ENCODE measurements at regions of chr2 and their contacts with region 1.

Region 1: GRCh38 chr2:71711133-71711855 is 257.9 kb downstream of the DYSF start:
- DNase-seq: no peak
- ATAC-seq: no peak
- H3K4me3 ChIP-seq: no peak overlapping the region
- H3K27ac ChIP-seq: no peak overlapping the region
- H3K4me1 ChIP-seq: no peaks in the 10 kb centered on the region
- H3K27me3 ChIP-seq: no peaks in the 10 kb centered on the region
- CTCF ChIP-seq: no peak

Region 2: GRCh38 chr2:71778936-71779773 is 67.9 kb after region 1 on chr2:
- CTCF ChIA-PET with region 1: no interaction called
- POLR2A ChIA-PET with region 1: no interaction called
- in situ Hi-C with region 1: no loop called
- intact Hi-C with region 1: no loop called
- DNase-seq: no peak
- ATAC-seq: peak; percentile 72; the same call in 1 of the 2 replicates
- H3K4me3 ChIP-seq: no peak overlapping the region
- H3K27ac ChIP-seq: no peak overlapping the region
- H3K4me1 ChIP-seq: 0 out of 2 replicates have a peak, but pooled peaks cover 3% of the 10 kb centered on the region
- H3K27me3 ChIP-seq: no peaks in the 10 kb centered on the region
- CTCF ChIP-seq: no peak

Region 3: DNA sequence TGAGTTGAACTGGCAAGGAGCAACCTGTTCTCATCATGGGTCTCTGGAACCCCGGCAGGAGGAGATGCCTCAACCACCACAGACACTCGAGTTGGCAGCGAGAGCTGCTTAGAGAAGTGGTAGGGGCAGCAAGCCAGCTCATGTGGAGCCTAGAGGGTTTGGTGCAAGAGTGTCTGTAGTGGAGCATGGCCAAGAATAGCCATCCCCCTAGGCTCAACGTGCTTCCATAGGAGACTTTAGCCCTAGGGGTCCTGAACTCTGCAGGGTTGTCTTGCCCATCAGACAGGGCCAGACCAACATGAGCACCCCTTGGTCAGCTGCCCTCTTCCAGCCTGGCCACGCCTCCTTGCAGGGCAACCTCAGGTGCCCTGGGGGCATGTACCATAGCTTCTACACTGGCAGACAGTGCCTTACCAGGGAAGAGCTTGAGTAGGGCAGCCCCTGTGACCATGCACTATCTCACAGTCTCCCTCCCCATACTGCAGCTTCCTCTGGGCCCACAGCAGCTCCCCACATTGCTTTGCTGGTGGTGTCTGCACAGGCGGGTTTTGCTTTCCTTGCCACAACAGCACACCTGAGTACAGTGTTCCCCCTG is 927.4 kb after region 1 on chr2:
- CTCF ChIA-PET with region 1: interaction called, 16 read pairs
- POLR2A ChIA-PET with region 1: no interaction called
- in situ Hi-C with region 1: no loop called
- intact Hi-C with region 1: no loop called
- DNase-seq: no peak
- ATAC-seq: no peak
- H3K4me3 ChIP-seq: no peak overlapping the region
- H3K27ac ChIP-seq: no peak overlapping the region
- H3K4me1 ChIP-seq: no peaks in the 10 kb centered on the region
- H3K27me3 ChIP-seq: no peaks in the 10 kb centered on the region
- CTCF ChIP-seq: no peak

Region 4: DNA sequence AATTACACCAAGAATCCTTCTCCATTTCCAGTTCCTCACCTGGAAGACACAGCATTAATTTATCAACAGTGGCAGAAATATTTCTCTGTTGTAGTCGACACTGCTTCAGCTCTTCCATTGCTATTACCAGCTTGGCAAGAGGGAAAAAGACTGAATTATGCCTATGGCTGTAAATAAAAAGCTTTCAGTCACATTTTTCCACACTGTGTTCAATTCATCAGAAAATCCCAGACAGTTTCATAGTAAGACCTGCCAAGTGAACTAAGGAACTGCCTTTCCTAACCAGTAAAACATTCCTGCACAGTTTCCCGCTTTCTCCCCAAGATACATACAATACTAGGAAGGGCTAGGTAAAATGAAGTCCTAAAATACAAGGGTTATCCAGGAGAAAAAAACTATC is 1019.8 kb after region 1 on chr2:
- CTCF ChIA-PET with region 1: no interaction called
- POLR2A ChIA-PET with region 1: no interaction called
- in situ Hi-C with region 1: no loop called
- intact Hi-C with region 1: no loop called
- DNase-seq: no peak
- ATAC-seq: no peak
- H3K4me3 ChIP-seq: no peak overlapping the region
- H3K27ac ChIP-seq: no peak overlapping the region
- H3K4me1 ChIP-seq: no peaks in the 10 kb centered on the region
- H3K27me3 ChIP-seq: no peaks in the 10 kb centered on the region
- CTCF ChIP-seq: no peak